ENCODE measurements at regions of chr1 and their contacts with region 1.

Region 1: GRCh38 chr1:204446370-204447111 is 34.9 kb upstream of the PPP1R15B start:
- DNase-seq: no peak
- H3K4me3 ChIP-seq: no peak overlapping the region
- H3K27ac ChIP-seq: peak overlapping the region; percentile 35 to 37
- H3K4me1 ChIP-seq: peaks cover 0 to 15% of the 10 kb centered on the region in 2 donors
- H3K27me3 ChIP-seq: no peaks in the 10 kb centered on the region
- CTCF ChIP-seq: peak in 2 of 3 donors; percentile 58 to 59
- POLR2A ChIP-seq: no peak

Region 2: DNA sequence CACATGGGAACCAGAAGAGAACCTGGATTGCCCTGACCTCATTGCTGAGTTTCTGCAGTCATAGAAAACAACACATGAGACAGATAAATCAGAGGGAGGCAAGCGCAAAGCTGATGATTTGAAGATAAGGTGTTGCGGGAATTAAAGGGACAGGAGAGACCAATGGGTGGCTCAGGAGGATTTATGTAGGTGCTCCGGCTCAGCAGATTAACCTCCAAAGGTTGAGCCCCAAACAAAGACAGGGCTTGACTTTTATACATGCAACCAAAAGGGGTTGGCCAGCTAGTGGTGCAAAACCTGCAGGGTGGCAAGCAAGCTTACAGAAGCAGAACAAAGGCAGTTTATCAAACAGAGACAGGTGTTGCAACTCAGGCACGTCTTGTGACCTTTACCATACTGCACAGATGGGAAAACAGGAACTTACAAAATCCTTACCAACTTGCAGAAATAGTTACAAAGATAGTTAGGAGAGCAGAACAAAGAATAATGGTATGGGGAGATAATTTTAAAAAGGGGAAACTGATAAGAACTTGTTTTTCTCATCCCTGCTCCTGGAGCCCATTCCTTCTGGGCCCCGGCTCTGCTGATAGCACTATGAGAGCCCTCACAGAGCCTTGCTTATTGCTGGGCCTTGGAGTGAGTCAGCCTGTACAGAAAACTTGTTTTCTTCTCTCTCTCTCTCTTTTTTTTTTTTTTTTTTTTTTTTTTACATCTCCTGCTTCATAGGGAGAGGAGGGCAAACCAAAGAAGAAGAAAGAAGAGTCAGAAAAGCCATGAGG is 491.6 kb before region 1 on chr1:
- intact Hi-C with region 1: no loop called
- DNase-seq: no peak
- H3K4me3 ChIP-seq: no peak overlapping the region
- H3K27ac ChIP-seq: no peak overlapping the region
- H3K4me1 ChIP-seq: no peaks in the 10 kb centered on the region
- H3K27me3 ChIP-seq: no peaks in the 10 kb centered on the region
- CTCF ChIP-seq: no peak
- POLR2A ChIP-seq: no peak

Region 3: DNA sequence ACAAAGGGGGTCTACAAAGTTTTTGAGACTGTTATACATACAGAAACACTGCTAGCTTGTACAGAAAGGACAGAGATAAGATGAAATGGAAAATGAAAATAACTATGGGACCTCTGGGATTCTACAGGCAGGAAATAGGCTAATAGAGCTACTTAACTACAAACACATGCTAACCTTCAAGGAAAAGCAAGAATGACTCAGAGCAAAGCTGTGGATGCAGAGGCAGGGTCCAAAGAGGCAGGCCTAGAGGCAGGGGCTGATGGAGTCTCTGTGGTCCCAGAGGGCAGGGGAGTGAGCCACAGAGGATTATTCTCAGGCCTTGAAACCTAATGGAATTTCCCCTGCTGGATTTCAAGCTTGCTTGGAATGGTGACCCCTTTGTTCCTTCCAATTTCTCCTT is 214.0 kb before region 1 on chr1:
- intact Hi-C with region 1: no loop called
- DNase-seq: no peak
- H3K4me3 ChIP-seq: no peak overlapping the region
- H3K27ac ChIP-seq: peak overlapping the region in 1 of 2 donors; percentile 38
- H3K4me1 ChIP-seq: no peaks in the 10 kb centered on the region
- H3K27me3 ChIP-seq: no peaks in the 10 kb centered on the region
- CTCF ChIP-seq: no peak
- POLR2A ChIP-seq: no peak

Region 4: DNA sequence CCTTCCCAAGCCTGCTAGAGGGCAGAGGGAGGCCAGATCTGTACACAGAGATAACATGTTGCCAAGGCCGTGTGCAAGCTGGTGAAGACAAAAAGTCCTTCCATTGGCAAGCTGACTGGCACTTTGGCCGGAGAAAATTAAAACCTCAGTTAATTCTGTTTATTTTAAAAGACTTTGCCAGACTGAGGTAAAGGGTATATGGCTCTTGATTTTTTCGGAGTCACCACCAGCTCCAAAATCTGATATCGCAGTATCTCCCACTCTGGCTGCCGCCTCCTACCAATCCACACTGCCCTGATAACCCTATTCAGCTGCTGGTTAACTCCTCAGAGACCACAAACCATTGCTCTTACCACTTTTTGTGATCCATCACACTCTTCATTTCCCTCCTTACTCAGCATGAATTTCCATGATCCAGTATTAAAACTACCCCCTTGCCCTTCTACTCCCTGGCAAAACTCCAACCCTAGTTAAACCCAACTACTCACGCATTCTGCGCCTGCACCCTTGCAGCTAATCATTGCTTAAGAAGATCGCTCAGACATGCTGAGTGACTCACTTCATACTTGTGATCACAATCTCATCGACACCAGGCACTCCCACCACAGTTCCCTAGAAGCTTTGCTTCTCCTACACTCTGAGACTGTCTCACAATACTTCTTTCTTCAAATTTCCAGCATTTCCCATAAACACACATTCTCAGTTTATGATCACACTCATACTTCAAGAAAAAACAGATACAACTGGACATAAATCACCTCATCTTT is 29.1 kb before region 1 on chr1:
- intact Hi-C with region 1: loop called (anchors 1 kb)
- DNase-seq: peak; percentile 73
- H3K4me3 ChIP-seq: peak overlapping the region; percentile 3 to 37 (median 3)
- H3K27ac ChIP-seq: peak overlapping the region; percentile 87 to 94
- H3K4me1 ChIP-seq: peaks cover 0 to 5% of the 10 kb centered on the region in 2 donors
- H3K27me3 ChIP-seq: no peaks in the 10 kb centered on the region
- CTCF ChIP-seq: no peak
- POLR2A ChIP-seq: no peak

Region 5: GRCh38 chr1:204506961-204507387 is 60.4 kb after region 1 on chr1:
- intact Hi-C with region 1: loop called (anchors 5 kb)
- DNase-seq: peak; percentile 74 to 86
- H3K4me3 ChIP-seq: peak overlapping the region; percentile 50 to 66 (median 62)
- H3K27ac ChIP-seq: peak overlapping the region; percentile 85 to 91
- H3K4me1 ChIP-seq: no peaks in the 10 kb centered on the region
- H3K27me3 ChIP-seq: no peaks in the 10 kb centered on the region
- CTCF ChIP-seq: peak in 1 of 3 donors; percentile 23
- POLR2A ChIP-seq: no peak

Region 6: DNA sequence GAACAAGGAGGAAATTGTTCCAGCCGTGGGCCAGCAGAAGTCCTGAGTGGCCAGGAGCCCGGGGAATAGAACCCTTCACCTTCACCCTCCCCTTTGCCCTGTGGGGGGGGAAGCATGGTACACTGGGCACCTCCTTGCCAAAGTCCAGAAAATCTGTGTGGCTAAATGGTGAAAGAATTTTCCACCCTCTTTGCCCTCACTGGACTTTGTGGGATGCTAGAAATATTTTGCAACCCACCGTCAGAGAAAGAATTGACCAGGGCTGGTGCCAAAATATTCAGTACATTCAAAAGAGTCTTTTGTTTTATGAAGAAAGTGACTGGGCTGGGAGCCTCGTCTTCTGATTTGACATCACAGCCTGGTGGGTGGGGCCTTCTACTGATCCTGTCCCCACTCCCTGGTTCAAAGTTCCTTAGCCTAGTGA is 438.8 kb after region 1 on chr1:
- intact Hi-C with region 1: no loop called
- DNase-seq: peak in 1 of 2 donors; percentile 90
- H3K4me3 ChIP-seq: peak overlapping the region in 1 of 3 donors; percentile 41
- H3K27ac ChIP-seq: peak overlapping the region; percentile 83
- H3K4me1 ChIP-seq: no peaks in the 10 kb centered on the region
- H3K27me3 ChIP-seq: no peaks in the 10 kb centered on the region
- CTCF ChIP-seq: no peak
- POLR2A ChIP-seq: no peak